GM10248 (cell line): ENCODE measurements at regions of chr1 and their contacts with region 1.

Region 1: GRCh38 chr1:244297616-244298015 is 154.1 kb downstream of the ADSS2 start:
- DNase-seq: no peak
- CTCF ChIP-seq: no peak

Region 2: GRCh38 chr1:244280221-244280620 is 17.4 kb before region 1 on chr1:
- CTCF ChIA-PET with region 1: interaction called, 13 read pairs
- POLR2A ChIA-PET with region 1: interaction called, 6 read pairs
- DNase-seq: no peak
- CTCF ChIP-seq: no peak

Region 3: GRCh38 chr1:244286341-244286740 is 11.3 kb before region 1 on chr1:
- CTCF ChIA-PET with region 1: interaction called, 42 read pairs
- POLR2A ChIA-PET with region 1: interaction called, 6 read pairs
- DNase-seq: no peak
- CTCF ChIP-seq: no peak